IMR-90 (cell line): ENCODE measurements at regions of chr15 and their contacts with region 1.

Region 1: GRCh38 chr15:45812200-45812599 is 177.4 kb downstream of the SQOR start:
- DNase-seq: no peak
- ATAC-seq: no peak
- H3K4me3 ChIP-seq: no peak overlapping the region
- H3K27ac ChIP-seq: no peak overlapping the region
- H3K4me1 ChIP-seq: no peaks in the 10 kb centered on the region
- H3K27me3 ChIP-seq: no peaks in the 10 kb centered on the region
- CTCF ChIP-seq: no peak
- POLR2A ChIP-seq: no peak
- RAD21 ChIP-seq: no peak

Region 2: GRCh38 chr15:45118131-45118588 is 694.0 kb before region 1 on chr15:
- CTCF ChIA-PET with region 1: no interaction called
- POLR2A ChIA-PET with region 1: no interaction called
- dilution Hi-C with region 1: no loop called
- in situ Hi-C with region 1: no loop called
- intact Hi-C with region 1: no loop called
- DNase-seq: peak; percentile 88
- ATAC-seq: peak; percentile 97
- H3K4me3 ChIP-seq: no peak overlapping the region
- H3K27ac ChIP-seq: no peak overlapping the region
- H3K4me1 ChIP-seq: peaks cover 3% of the 10 kb centered on the region
- H3K27me3 ChIP-seq: peaks cover 46% of the 10 kb centered on the region
- CTCF ChIP-seq: peak; percentile 100
- POLR2A ChIP-seq: no peak
- RAD21 ChIP-seq: peak; percentile 79

Region 3: DNA sequence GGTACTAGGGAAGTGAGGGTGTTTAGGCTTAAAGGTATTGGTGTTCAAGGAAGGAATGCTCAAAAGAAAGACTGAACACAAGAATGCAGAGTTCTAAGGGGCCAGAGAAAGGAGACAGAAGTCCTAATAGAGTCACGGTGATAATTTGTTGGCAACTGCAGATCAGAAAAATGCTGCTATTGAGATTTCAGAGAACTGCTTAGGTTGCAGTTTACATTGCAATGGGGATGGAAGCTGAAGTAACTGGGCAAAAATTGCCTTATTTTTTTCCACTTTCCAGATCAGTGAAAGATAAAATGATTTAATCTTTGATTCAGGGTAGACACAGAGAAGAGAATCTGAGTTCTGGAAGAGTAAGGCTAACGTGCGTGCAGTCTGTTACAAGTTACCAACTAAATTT is 22.4 kb after region 1 on chr15:
- CTCF ChIA-PET with region 1: no interaction called
- POLR2A ChIA-PET with region 1: no interaction called
- dilution Hi-C with region 1: no loop called
- in situ Hi-C with region 1: no loop called
- intact Hi-C with region 1: loop called (anchors 1 kb)
- DNase-seq: no peak
- ATAC-seq: no peak
- H3K4me3 ChIP-seq: no peak overlapping the region
- H3K27ac ChIP-seq: no peak overlapping the region
- H3K4me1 ChIP-seq: no peaks in the 10 kb centered on the region
- H3K27me3 ChIP-seq: no peaks in the 10 kb centered on the region
- CTCF ChIP-seq: no peak
- POLR2A ChIP-seq: no peak
- RAD21 ChIP-seq: no peak

Region 4: DNA sequence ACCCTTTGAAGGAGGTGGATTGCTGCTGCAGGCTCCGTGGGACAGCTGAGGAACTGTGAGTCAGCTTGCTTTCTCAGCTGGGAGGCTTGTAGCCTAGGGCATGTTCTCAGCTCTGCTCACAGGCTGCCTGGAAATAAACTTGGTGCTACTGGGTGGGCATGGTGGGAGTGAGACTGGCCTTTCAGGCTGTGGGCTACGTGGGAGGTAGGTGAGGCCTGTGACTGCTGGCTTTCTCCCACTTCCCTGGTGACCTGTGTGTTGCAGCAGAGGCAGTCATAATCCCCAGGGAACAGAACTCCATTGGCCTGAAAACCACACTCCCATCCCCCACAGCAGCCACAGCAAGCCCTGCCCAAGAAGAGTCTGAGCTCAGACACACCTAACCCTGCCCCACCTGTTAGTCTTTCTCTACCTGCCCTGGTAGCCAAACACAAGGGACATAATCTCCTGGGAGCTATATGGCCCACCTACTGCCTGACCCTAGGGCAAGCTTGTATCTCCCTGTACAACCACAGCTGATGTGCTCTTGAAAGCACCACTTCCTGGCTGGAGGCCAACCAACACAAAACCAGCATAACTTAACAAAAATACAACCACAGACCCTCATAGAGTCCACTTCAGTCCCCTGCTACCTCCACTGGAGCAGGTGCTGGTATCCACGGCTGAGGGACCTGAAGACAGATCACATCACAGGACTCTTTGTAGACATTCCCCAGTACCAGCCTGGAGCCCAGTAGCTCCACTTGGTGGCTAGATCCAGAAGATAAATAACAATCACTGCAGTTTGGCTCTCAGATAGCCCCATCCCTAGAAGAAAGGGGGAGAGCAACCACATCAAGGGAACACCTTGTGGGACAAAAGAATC is 59.2 kb after region 1 on chr15:
- CTCF ChIA-PET with region 1: no interaction called
- POLR2A ChIA-PET with region 1: no interaction called
- dilution Hi-C with region 1: no loop called
- in situ Hi-C with region 1: no loop called
- intact Hi-C with region 1: no loop called
- DNase-seq: no peak
- ATAC-seq: no peak
- H3K4me3 ChIP-seq: no peak overlapping the region
- H3K27ac ChIP-seq: no peak overlapping the region
- H3K4me1 ChIP-seq: no peaks in the 10 kb centered on the region
- H3K27me3 ChIP-seq: no peaks in the 10 kb centered on the region
- CTCF ChIP-seq: no peak
- POLR2A ChIP-seq: no peak
- RAD21 ChIP-seq: no peak